Dendritic cell treated with granulocyte-macrophage colony-stimulating factor and Interleukin-4, amounts not matched to agents 40 ng/mL and 50 ng/mL, for 4 days (primary cell): ENCODE measurements at regions of chr20 and their contacts with region 1.

Region 1: GRCh38 chr20:49338061-49338460 is 60.2 kb upstream of the ZNFX1 start:
- H3K4me3 Mint-ChIP-seq: no peak overlapping the region
- H3K27ac Mint-ChIP-seq: no peak overlapping the region
- H3K4me1 Mint-ChIP-seq: no peaks in the 10 kb centered on the region
- H3K27me3 Mint-ChIP-seq: peaks cover 1% of the 10 kb centered on the region

Region 2: GRCh38 chr20:49508435-49509199 is 170.6 kb after region 1 on chr20:
- intact Hi-C with region 1: loop called (anchors 1 kb)
- H3K4me3 Mint-ChIP-seq: no peak overlapping the region
- H3K27ac Mint-ChIP-seq: no peak overlapping the region
- H3K4me1 Mint-ChIP-seq: no peaks in the 10 kb centered on the region
- H3K27me3 Mint-ChIP-seq: peaks cover 45% of the 10 kb centered on the region

Region 3: DNA sequence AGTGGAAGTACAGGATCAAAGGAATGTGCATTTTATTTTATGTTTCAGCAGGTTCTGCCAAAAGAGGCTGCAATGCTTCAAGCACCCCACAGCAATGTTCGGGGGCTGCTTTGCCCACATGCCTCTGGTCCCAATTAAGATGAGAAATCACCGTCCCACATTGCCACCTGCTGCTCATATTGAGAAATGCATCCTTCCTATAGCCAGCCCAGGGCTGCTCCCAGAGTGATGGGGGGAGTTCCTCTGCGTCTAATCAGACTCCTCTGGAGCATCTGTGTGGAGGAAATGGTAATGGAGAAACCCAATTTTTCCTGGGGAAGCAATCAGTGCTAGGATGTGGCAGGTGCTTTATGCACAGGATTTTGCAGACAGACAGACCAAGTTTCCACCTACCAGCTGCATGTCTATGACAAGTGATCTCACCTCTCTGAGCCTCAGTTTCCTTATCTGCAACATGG is 196.2 kb after region 1 on chr20:
- intact Hi-C with region 1: loop called (anchors 1 kb)
- H3K4me3 Mint-ChIP-seq: no peak overlapping the region
- H3K27ac Mint-ChIP-seq: no peak overlapping the region
- H3K4me1 Mint-ChIP-seq: peaks cover 12% of the 10 kb centered on the region
- H3K27me3 Mint-ChIP-seq: peaks cover 22% of the 10 kb centered on the region